A673 (cell line): ENCODE measurements at regions of chr19 and their contacts with region 1.

Region 1: DNA sequence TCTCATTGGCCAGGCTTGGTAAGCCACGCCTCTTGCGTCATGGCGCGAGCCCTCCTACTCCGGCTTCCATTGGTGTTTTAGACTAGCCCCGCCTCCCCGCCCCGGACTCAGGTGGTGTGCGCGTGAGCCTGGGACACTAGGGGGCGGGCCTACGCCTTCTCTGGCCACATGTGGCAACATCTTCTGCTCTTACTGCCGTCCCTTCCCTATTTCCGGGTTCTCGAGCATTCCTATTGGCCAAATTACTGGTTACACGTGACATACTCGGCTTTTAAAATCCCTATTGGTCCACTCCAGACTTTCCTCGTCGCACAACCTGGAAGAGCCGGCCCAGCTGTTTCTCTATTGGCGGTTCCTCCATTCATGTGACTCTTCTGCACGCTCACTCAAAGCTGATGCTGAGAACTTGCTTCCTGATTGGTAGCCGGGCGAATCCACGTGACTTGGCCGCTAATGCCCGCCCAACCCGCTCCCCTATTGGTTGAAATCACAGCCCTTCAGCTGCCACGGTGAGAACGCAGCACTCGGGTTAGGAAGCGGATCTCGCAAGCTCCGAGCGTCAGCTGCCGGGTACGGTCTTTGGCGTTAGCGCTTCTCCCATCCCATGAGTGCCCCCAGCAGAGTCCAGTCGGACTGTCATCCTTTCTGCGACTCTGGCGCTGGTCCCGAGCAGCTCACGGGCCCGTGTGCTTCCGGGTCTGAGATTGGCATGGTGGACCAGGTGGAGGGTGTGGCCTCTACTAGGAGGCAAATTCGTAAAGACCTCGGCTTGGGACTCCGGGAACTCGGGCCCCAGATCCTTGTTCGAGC is at the start of gene BLOC1S3:
- DNase-seq: peak; percentile 100
- H3K4me3 ChIP-seq: peak within 1 kb of the TSS; percentile 77
- H3K27ac ChIP-seq: peak within 1 kb of the TSS; percentile 73
- H3K4me1 ChIP-seq: peaks cover 7% of the 10 kb centered on the region
- H3K27me3 ChIP-seq: no peaks in the 10 kb centered on the region
- CTCF ChIP-seq: peak; percentile 51
- total RNA-seq, gene BLOC1S3: 8.7 and 9.1 TPM in 2 replicates

Region 2: DNA sequence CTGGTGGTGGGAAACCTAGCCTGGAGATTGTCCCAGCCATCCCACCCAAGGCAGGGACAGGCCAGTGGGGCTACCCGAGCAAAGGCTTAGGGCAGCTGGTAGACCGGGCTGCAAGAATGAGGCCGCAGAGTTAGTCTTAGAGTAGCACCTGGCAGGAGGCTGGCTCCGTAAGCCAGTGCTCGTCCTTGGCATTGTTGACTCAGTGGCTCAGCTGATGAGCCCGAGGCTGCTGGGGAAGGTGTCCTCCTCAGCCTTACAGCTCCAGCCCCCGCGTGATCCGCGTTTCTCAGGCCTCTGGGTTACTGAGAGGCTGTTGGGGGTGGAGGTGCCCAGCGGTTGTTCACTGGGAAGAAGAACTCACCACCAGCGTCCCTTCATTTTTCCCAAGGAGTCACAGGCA is 60.8 kb before region 1 on chr19:
- CTCF ChIA-PET with region 1: no interaction called
- POLR2A ChIA-PET with region 1: no interaction called
- intact Hi-C with region 1: no loop called
- DNase-seq: no peak
- H3K4me3 ChIP-seq: no peak overlapping the region
- H3K27ac ChIP-seq: no peak overlapping the region
- H3K4me1 ChIP-seq: peaks cover 5% of the 10 kb centered on the region
- H3K27me3 ChIP-seq: no peaks in the 10 kb centered on the region
- CTCF ChIP-seq: no peak

Region 3: GRCh38 chr19:45152504-45153338 is 25.7 kb before region 1 on chr19:
- CTCF ChIA-PET with region 1: no interaction called
- POLR2A ChIA-PET with region 1: no interaction called
- intact Hi-C with region 1: loop called (anchors 1 kb)
- DNase-seq: peak; percentile 77
- H3K4me3 ChIP-seq: peak overlapping the region; percentile 27
- H3K27ac ChIP-seq: no peak overlapping the region
- H3K4me1 ChIP-seq: peaks cover 13% of the 10 kb centered on the region
- H3K27me3 ChIP-seq: peaks cover 17% of the 10 kb centered on the region
- CTCF ChIP-seq: peak; percentile 36; the same call in 1 of the 2 replicates